ENCODE measurements at regions of chr4 and their contacts with region 1.

Region 1: DNA sequence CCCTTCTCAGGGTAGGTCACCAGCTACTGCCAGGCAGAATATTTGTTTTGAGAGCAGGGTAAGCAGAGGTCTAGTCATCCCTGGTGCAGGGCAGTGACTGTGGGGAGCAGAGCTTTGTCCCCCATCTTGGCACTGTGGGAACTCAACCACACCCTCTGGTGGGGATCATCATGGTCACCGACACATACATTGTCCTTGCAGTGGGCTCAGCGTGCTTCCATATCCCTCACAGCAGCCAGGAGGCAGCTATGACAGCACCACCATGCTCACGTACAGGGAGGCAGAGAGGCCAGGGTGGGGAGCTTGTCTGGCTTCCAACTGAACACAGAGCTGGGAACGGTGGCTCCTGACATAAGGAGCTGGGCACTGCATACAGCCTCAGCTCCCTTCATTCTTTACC is 102.3 kb downstream of the ENPP6 start:
- DNase-seq: no peak
- H3K4me3 Mint-ChIP-seq: no peak overlapping the region
- H3K27ac Mint-ChIP-seq: no peak overlapping the region
- H3K4me1 Mint-ChIP-seq: no peaks in the 10 kb centered on the region
- H3K27me3 Mint-ChIP-seq: peaks cover 46% of the 10 kb centered on the region
- CTCF ChIP-seq: no peak

Region 2: GRCh38 chr4:184080674-184081073 is 34.7 kb before region 1 on chr4:
- CTCF ChIA-PET with region 1: no interaction called
- intact Hi-C with region 1: loop called (anchors 1 kb)
- DNase-seq: no peak
- H3K4me3 Mint-ChIP-seq: no peak overlapping the region
- H3K27ac Mint-ChIP-seq: no peak overlapping the region
- H3K4me1 Mint-ChIP-seq: no peaks in the 10 kb centered on the region
- H3K27me3 Mint-ChIP-seq: peaks cover 63% of the 10 kb centered on the region
- CTCF ChIP-seq: no peak